CD4-positive, alpha-beta memory T cell (primary cell): ENCODE measurements at regions of chr11 and their contacts with region 1.

Region 1: DNA sequence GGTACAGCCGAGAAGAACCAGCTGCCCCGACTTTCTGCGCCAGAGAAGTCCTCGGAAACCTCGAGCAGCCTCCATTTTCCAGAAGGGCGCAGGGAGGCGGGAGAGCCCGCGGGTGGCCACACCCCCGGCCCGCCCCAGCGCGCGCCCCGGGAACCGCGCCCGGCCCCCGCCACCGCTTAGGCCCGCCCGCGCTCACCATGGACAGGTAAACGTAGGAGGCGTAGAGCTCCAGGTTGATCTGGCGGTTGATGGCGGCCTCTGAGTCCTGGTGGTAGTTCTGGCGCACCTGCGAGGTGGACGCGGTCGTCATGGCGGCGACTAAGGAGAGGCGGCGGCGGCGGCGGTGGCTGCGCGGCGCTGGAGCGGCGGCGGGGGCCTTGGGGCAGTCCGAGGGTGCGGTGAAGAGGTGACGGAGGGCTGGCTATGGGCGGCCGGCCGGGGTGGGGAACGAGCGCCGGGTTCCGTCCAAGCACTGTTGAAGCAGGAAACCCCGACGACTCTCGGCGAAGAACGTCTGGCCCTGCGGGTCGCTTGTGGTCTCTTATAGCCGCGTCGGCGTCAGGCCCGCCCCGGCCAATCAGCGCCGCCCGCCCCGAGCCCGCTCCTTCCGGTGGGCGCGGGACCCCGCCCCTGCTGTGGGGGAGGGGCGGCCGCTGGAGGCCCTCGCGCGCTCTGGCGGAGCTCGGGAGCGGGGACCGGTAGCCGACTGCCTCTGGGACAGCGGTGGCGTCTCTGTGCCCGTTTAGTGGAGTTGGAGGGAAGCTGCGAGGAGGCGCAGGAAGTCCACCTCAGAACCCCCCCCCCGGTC is at the start of gene FTH1:
- DNase-seq: peak; percentile 91 to 95 (median 92)
- H3K4me3 ChIP-seq: peak within 1 kb of the TSS; percentile 99 to 100
- H3K4me3 Mint-ChIP-seq: peak within 1 kb of the TSS; percentile 92 to 97 (median 95)
- H3K27ac ChIP-seq: peak within 1 kb of the TSS; percentile 89
- H3K27ac Mint-ChIP-seq: peak within 1 kb of the TSS; percentile 90 to 99 (median 98)
- H3K4me1 ChIP-seq: peaks cover 38% of the 10 kb centered on the region
- H3K4me1 Mint-ChIP-seq: peaks cover 36 to 74% (median 50%) of the 10 kb centered on the region in 4 donors
- H3K27me3 ChIP-seq: no peaks in the 10 kb centered on the region
- H3K27me3 Mint-ChIP-seq: no peaks in the 10 kb centered on the region
- total RNA-seq, gene FTH1: 695 to 763 TPM

Region 2: GRCh38 chr11:61947486-61948210 is 19.7 kb before region 1 on chr11:
- CTCF ChIA-PET with region 1: interaction called, 9 read pairs
- POLR2A ChIA-PET with region 1: interaction called, 14 read pairs
- intact Hi-C with region 1: no loop called
- DNase-seq: peak; percentile 55 to 64 (median 59)
- H3K4me3 ChIP-seq: no peak overlapping the region
- H3K4me3 Mint-ChIP-seq: no peak overlapping the region
- H3K27ac ChIP-seq: no peak overlapping the region
- H3K27ac Mint-ChIP-seq: peak overlapping the region in 2 of 7 donors; percentile 41 to 82
- H3K4me1 ChIP-seq: no peaks in the 10 kb centered on the region
- H3K4me1 Mint-ChIP-seq: no peaks in the 10 kb centered on the region
- H3K27me3 ChIP-seq: no peaks in the 10 kb centered on the region
- H3K27me3 Mint-ChIP-seq: peaks cover 0 to 3% of the 10 kb centered on the region in 2 donors

Region 3: DNA sequence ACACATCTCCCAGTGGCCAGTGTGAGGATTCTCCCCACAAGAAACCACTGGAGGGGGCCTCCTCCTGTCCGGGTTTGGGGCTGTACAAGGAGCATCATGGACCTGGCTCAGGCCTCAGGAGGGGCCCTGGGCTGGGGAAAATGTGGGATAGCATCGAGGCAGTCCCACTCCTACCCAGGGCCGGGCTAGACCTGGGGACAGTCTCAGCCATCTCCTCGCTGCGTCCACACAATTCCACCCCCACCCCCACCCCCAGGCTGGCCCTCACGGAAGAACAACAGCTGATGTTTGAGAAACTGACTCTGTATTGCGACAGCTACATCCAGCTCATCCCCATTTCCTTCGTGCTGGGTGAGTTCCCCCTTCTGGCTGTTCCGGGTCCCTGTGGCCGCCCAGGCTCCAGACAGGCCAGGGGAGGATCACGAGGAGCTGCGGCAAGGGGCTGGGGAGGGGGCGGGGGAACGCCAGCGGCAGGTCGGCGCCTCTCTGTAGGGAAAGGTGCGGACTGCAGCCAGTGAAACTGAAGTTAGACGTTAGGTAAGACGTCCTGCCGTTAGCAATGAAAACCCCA is 12.4 kb before region 1 on chr11:
- CTCF ChIA-PET with region 1: interaction called, 3 read pairs
- POLR2A ChIA-PET with region 1: interaction called, 14 read pairs
- intact Hi-C with region 1: no loop called
- DNase-seq: no peak
- H3K4me3 ChIP-seq: no peak overlapping the region
- H3K4me3 Mint-ChIP-seq: peak overlapping the region in 5 of 8 donors; percentile 31 to 60 (median 40)
- H3K27ac ChIP-seq: no peak overlapping the region
- H3K27ac Mint-ChIP-seq: peak overlapping the region in 2 of 7 donors; percentile 52 to 86
- H3K4me1 ChIP-seq: peaks cover 10% of the 10 kb centered on the region
- H3K4me1 Mint-ChIP-seq: peaks cover 2 to 9% (median 6%) of the 10 kb centered on the region in 4 donors
- H3K27me3 ChIP-seq: peaks cover 6% of the 10 kb centered on the region
- H3K27me3 Mint-ChIP-seq: peaks cover 2 to 8% of the 10 kb centered on the region in 2 donors

Region 4: DNA sequence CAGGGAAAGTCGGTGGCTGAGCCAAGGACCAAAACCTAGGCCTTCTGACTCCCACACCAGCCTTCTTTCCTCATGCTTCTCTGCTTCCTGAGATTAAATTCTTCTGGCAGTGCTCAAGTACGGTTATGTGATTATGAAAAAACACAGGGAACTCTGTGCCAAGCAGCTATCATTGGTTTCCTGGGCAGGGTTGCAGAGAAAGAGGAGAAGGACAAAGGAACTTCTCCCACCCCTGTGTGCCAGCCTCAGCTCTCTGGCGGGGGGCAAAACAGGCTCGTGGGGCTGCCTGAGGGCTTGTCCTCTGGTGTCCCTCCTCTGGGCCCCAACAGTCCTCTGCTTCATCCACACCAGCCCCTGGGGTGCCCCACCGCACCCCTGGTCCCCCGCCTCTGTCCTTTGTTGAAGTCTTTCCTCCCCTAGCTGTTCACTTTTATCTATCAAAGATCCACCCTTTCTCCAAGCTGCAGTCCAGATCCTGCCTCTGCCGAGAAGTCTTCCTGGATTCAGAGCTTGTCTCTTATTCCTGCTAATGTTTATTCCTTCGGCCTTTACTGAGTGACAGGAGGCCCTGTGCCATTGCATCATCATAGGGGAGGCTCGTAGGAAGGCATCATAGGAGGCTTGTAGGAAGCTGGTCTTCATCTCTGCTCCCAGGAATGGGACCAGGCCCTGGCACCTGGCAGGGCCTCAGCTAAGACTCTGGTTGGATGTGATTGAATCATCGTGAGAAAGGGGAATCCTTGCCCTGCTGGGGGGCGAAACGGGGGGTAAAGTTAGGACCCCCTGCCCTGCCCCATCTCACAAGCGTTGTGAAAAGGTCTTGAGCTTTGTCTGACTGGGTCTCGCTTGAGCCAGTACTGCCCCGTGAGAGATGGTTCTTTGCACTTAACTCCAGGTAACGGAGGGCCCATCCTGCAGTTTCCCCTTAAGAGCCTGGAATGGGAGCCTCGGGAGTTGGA is 11.7 kb after region 1 on chr11:
- CTCF ChIA-PET with region 1: interaction called, 4 read pairs
- POLR2A ChIA-PET with region 1: interaction called, 23 read pairs
- intact Hi-C with region 1: no loop called
- DNase-seq: no peak
- H3K4me3 ChIP-seq: no peak overlapping the region
- H3K4me3 Mint-ChIP-seq: no peak overlapping the region
- H3K27ac ChIP-seq: no peak overlapping the region
- H3K27ac Mint-ChIP-seq: peak overlapping the region in 3 of 7 donors; percentile 2 to 52 (median 13)
- H3K4me1 ChIP-seq: no peaks in the 10 kb centered on the region
- H3K4me1 Mint-ChIP-seq: no peaks in the 10 kb centered on the region
- H3K27me3 ChIP-seq: no peaks in the 10 kb centered on the region
- H3K27me3 Mint-ChIP-seq: no peaks in the 10 kb centered on the region

Region 5: DNA sequence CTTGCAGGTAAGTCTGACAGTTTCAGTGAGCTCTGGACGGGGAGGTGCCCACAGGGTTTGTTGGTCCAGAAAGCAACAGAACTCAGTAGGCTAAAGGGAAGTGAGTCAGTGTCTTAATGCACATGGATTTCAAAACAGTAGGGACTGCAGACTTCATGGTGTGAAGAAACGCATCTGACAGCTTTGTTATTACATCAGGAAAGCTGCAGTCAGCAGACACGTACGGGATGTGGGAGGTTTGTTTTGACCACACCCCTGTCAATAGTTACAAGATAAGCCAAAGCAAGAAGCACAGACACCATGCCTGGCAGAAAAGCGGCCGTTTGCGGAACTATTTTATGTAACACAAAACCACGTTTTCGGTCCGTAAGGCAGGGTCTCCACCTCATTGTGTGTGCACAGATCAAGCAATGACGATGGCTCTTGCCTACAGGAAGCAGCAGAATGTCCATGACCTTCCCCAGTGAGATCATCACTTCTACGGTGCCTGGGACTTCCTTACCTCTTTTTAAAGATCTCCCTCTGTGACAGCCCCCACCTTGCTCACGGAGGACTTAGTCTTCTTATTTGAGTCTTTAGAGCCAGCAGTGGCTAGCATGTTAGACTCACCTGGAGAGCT is 58.3 kb after region 1 on chr11:
- CTCF ChIA-PET with region 1: interaction called, 31 read pairs
- POLR2A ChIA-PET with region 1: interaction called, 352 read pairs
- intact Hi-C with region 1: loop called (anchors 1 kb)
- DNase-seq: peak; percentile 90 to 98 (median 95)
- H3K4me3 ChIP-seq: peak overlapping the region in 1 of 2 donors; percentile 35
- H3K4me3 Mint-ChIP-seq: peak overlapping the region; percentile 67 to 91 (median 78)
- H3K27ac ChIP-seq: peak overlapping the region; percentile 86
- H3K27ac Mint-ChIP-seq: peak overlapping the region; percentile 94 to 100 (median 100)
- H3K4me1 ChIP-seq: peaks cover 24% of the 10 kb centered on the region
- H3K4me1 Mint-ChIP-seq: peaks cover 13 to 30% (median 23%) of the 10 kb centered on the region in 4 donors
- H3K27me3 ChIP-seq: no peaks in the 10 kb centered on the region
- H3K27me3 Mint-ChIP-seq: no peaks in the 10 kb centered on the region